ENCODE measurements at regions of chr20 and their contacts with region 1.

Region 1: DNA sequence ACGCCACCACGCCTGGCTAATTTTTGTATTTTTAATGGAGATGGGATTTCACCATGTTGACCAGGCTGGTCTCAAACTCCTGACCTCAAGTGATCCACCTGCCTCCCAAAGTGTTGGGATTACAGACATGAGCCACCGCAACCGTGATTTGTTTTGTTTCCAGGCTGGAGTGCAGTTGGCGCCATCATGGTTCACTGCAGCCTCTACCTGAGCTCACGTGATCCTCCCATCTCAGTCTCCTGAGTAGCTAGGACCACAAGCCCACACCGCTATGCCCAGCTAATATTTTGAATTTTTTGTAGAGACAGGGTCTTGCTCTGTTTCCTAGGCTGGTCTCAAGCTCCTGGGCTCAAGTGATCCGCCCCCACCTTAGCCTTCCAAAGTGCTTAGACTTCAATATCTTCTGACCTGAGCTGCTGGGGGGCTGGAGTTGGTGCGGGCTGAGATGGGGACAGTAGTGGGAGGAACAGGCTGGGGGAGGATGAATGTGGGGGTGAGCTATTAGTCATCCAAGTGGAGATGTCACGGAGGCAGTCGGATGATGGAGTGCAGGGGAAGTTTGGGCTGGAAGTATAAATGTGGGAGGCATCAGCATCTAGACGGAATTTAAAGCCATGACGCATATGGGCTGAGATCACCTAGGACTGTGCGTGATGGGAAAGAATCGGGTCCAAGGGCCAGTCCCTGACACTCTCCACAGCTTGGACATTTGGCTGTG is 23.1 kb upstream of the ZMYND8 start:
- DNase-seq: no peak
- ATAC-seq: no peak
- H3K4me3 ChIP-seq: no peak overlapping the region
- H3K27ac ChIP-seq: no peak overlapping the region
- H3K4me1 ChIP-seq: peaks cover 11% of the 10 kb centered on the region
- H3K27me3 ChIP-seq: no peaks in the 10 kb centered on the region
- CTCF ChIP-seq: no peak

Region 2: DNA sequence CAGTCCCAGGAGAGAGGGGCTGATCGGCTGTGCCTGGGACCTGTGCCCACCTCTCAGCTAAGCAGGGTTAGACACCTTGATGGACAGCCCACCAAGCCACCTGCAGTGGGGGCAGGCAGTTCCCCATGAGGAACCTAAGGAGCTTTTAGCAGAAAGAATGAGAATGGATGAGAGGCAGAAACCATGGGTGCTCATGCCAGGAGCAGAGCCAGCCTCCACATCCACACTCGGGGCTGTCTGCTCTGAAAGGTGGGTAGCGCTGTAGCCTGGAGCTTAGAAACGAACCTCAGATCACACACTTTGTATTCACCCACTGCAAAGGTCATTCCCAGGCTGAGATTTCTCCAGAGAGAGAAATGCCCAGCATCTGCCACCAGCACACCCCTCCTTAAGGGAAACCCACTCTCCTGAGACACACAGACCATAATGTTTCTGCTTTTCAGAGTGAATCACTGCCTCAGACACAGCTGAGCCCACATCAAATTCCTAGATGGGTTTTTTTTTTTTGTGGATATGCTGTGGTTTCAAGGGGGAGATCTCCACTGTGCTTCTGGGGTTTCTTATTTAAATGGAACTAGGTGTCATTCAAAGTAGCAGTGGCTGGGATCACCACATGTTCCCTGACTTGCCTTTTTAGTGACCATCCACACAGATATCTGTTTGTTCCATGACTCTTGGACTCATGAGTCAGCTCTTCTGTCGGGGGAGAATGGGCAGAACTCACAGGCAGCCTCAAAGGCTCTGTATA is 266.1 kb before region 1 on chr20:
- intact Hi-C with region 1: no loop called
- DNase-seq: no peak
- ATAC-seq: no peak
- H3K4me3 ChIP-seq: no peak overlapping the region
- H3K27ac ChIP-seq: no peak overlapping the region
- H3K4me1 ChIP-seq: no peaks in the 10 kb centered on the region
- H3K27me3 ChIP-seq: no peaks in the 10 kb centered on the region
- CTCF ChIP-seq: no peak

Region 3: DNA sequence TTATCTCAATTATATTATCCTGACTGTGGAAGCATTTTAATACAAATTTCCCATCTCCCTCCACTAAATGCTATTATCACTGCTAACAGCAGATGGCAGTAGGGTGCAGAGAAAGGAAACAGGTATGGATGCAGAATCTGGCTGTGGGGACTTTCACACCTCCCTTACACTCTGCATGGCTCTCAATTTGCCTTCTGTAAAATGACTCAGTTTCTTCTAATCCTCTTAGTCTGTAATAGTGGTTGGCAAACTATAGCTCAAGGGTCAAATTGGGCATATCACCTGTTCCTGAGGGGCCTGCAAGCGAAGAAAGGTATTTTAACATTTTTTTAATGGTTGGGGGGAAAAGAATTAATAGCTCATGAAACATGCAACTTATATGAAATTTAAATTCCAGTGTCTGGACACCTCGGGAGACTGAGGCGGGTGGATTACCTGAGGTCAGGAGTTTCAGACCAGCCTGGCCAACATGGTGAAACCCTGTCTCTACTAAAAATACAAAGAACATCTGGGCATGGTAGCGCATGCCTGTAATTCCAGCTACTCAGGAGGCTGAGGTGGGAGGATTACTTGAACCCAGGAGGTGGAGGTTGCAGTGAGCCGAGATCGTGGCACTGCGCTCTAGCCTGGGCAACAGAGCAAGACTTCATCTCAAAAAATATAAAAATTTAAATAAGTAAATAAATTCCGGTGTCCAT is 106.5 kb before region 1 on chr20:
- intact Hi-C with region 1: loop called (anchors 1 kb)
- DNase-seq: no peak
- ATAC-seq: peak; percentile 62 to 85 (median 78)
- H3K4me3 ChIP-seq: no peak overlapping the region
- H3K27ac ChIP-seq: peak overlapping the region; percentile 38
- H3K4me1 ChIP-seq: peaks cover 34% of the 10 kb centered on the region
- H3K27me3 ChIP-seq: no peaks in the 10 kb centered on the region
- CTCF ChIP-seq: peak; percentile 90

Measured in psoas muscle (tissue), 8 donors.